HEK293T (cell line): ENCODE measurements at regions of chr22 and their contacts with region 1.

Region 1: DNA sequence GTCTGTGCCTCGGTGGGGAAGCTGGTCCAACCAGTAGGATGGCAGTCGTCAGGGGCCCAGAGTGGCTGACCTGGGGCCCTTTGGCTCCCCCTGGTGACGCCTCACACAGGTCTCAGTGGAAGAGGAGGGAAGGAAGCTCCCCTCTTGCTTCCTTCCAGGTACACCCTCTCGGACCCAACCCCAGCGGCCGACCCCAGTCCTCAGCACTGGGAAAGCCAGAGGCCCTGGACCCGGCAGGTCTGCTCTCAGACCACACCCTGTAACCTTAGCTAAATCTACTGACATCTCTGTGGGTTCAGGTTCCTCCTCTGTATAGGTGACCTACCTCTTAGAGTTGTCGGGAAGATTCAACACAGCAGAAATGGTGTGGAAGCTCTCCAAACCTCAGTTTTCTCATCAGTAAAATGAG is 3.4 kb upstream of the SCUBE1 start:
- DNase-seq: peak; percentile 75

Region 2: DNA sequence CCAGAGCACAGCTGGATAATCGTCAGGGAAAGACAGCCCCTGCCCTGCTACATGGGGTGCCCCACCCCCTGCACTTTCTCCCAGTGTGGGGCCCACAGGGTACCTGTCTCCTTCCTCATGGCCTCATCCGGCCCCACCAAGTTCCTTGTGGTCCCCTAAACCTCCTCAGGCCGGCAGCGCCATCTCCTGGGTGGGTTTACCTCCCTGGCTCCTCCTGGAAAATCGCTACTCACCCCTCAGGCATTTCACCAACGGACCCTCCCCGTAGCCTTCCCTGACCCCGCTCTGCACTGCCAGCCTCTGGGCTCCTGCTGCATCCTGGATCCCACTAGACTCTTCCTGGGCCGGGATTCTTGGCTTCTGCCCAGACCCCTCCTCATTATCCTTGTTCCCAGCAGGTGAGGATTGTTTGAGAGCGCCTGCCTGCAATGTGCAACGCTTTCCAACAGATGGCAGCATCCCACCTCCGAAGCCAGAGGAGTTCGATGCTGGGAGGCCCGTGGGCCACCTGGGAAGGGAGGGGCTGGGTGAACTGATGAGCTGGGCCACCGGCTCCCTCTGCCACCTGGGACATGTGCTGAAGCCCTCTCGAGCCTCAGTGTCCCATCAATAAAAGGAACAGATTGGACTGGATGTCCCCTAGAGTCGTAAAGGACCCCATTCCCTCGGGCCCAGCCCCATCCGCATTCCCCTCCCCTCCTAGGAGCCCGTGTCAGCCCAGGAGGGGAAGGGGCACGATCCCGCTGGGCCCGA is 115.4 kb before region 1 on chr22:
- CTCF ChIA-PET with region 1: interaction called, 18 read pairs
- POLR2A ChIA-PET with region 1: no interaction called
- DNase-seq: peak; percentile 87

Region 3: GRCh38 chr22:43263645-43264514 is 82.6 kb before region 1 on chr22:
- CTCF ChIA-PET with region 1: interaction called, 162 read pairs
- POLR2A ChIA-PET with region 1: no interaction called
- DNase-seq: peak; percentile 68

Region 4: DNA sequence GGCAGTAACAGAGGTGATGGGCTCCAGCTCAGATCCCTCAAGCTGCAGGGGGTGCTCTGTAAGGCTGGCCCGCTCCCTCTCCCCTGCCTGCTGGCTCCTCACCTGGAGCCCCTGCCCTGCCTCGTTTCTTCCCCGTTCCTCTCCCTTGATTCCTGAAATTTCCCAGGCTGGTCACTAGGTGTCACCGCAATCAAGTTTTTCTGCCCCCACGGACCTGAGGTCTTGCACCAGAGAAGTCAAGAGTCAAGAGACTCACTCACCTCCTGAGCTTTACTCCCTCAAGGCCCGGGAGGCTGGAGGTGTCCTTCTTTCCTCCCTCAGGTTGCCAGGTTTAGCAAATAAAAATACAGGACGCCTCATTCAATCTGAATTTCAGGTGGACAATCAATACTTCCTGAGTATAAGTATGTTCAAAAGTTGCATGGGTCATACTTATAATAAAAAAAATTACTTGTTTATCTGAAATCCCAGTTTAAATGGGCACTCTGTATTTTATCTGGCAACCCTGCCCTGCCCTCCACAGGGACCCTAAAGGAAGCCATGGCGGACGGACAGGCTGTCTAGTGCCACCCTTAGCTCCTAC is 72.5 kb before region 1 on chr22:
- CTCF ChIA-PET with region 1: interaction called, 162 read pairs
- POLR2A ChIA-PET with region 1: interaction called, 5 read pairs
- DNase-seq: peak; percentile 78

Region 5: DNA sequence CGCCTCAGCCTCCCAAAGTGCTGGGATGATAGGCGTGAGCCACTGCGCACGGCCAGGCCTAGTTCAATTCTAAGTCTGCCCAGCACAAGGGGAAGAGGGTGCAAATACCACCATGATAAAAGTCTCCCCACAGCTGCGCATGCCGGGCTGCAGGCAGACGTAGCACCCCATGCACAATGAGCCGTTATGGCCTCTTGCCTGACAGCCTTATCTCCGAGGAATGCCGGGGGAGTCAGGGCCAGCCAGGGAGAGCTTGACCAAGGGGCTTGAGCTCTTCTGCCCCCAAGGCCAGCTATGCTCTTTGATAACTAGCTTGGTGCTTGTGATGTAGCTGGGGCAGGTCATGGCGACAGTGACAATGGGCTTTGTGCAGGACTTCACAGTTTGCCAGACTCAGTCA is 10.4 kb after region 1 on chr22:
- CTCF ChIA-PET with region 1: interaction called, 11 read pairs
- POLR2A ChIA-PET with region 1: no interaction called
- DNase-seq: no peak